ENCODE measurements at regions of chr11 and their contacts with region 1.

Region 1: GRCh38 chr11:83724008-83724461 is 437.9 kb upstream of the CCDC90B start:
- DNase-seq: peak; percentile 23
- ATAC-seq: peak; percentile 78
- H3K4me3 ChIP-seq: no peak overlapping the region
- H3K27ac ChIP-seq: no peak overlapping the region
- H3K4me1 ChIP-seq: peaks cover 11% of the 10 kb centered on the region; the same call in 1 of the 2 replicates
- H3K27me3 ChIP-seq: 0 out of 4 replicates have a peak, but pooled peaks cover 0 to 2% of the 10 kb centered on the region in 2 experiments
- CTCF ChIP-seq: peak; percentile 33 to 56 (median 51); a peak in 5 of 6 replicates
- EP300 ChIP-seq: no peak
- POLR2A ChIP-seq: no peak
- RAD21 ChIP-seq: peak; percentile 76

Region 2: GRCh38 chr11:82906244-82906654 is 817.8 kb before region 1 on chr11:
- CTCF ChIA-PET with region 1: interaction called, 3 read pairs
- POLR2A ChIA-PET with region 1: no interaction called
- RAD21 ChIA-PET with region 1: no interaction called
- SMC1A ChIA-PET with region 1: interaction called, 4 read pairs
- in situ Hi-C with region 1: no loop called
- intact Hi-C with region 1: loop called (anchors 5 kb)
- DNase-seq: no peak
- ATAC-seq: no peak
- H3K4me3 ChIP-seq: no peak overlapping the region
- H3K27ac ChIP-seq: peak overlapping the region; percentile 49; the same call in 1 of the 2 replicates
- H3K4me1 ChIP-seq: peaks cover 15% of the 10 kb centered on the region; the same call in 1 of the 2 replicates
- H3K27me3 ChIP-seq: no peaks in the 10 kb centered on the region
- CTCF ChIP-seq: peak in 1 of 3 experiments; percentile 32; a peak in 2 of 6 replicates
- EP300 ChIP-seq: no peak
- POLR2A ChIP-seq: no peak
- RAD21 ChIP-seq: peak; percentile 66

Region 3: GRCh38 chr11:83583757-83584352 is 140.2 kb before region 1 on chr11:
- CTCF ChIA-PET with region 1: no interaction called
- POLR2A ChIA-PET with region 1: no interaction called
- RAD21 ChIA-PET with region 1: no interaction called
- SMC1A ChIA-PET with region 1: no interaction called
- in situ Hi-C with region 1: no loop called
- intact Hi-C with region 1: loop called (anchors 5 kb)
- DNase-seq: peak; percentile 56
- ATAC-seq: peak; percentile 98
- H3K4me3 ChIP-seq: no peak overlapping the region
- H3K27ac ChIP-seq: peak overlapping the region; percentile 36; the same call in 1 of the 2 replicates
- H3K4me1 ChIP-seq: peaks cover 17% of the 10 kb centered on the region
- H3K27me3 ChIP-seq: no peaks in the 10 kb centered on the region
- CTCF ChIP-seq: no peak
- EP300 ChIP-seq: peak in 1 of 2 experiments; percentile 42; a peak in 1 of 4 replicates
- POLR2A ChIP-seq: no peak
- RAD21 ChIP-seq: no peak